Mammary epithelial cell (primary cell): ENCODE measurements at regions of chr20 and their contacts with region 1.

Region 1: DNA sequence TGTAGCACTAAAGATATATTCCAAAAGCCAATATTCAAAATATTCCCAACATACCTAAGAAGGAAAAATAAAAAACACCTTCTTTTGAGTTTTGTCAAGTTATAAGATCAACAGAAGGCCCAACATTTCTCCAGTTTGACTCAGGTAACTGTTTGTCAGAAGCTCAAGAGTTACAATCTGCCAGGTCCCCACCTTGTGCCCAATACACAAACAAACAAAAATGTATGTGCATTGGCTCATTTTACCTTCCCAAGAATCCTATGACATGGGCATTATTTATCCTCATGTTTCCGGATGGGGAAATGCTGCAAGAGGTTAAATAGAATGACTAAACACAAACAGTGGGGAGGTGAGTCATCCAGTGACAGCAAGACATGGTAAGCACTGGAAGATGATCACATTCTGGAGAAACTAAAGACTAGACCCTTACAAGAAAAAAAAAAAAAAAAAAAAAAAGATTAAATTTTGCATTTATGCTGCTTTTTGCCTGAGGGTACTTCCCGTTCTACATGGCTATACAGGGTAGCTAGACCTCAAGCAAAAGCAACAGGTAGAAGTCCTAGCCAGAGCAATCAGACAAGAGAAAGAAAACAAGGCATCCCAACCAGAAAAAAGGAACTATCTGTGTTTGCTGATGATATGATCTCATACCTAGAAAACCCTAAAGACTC is 23.6 kb upstream of the ANKRD60 start:
- DNase-seq: peak; percentile 85
- H3K4me3 ChIP-seq: no peak overlapping the region
- H3K27ac ChIP-seq: peak overlapping the region; percentile 57
- H3K4me1 ChIP-seq: peaks cover 14% of the 10 kb centered on the region
- H3K27me3 ChIP-seq: no peaks in the 10 kb centered on the region
- CTCF ChIP-seq: no peak

Region 2: GRCh38 chr20:58330687-58331086 is 78.6 kb after region 1 on chr20:
- CTCF ChIA-PET with region 1: no interaction called
- dilution Hi-C with region 1: no loop called
- in situ Hi-C with region 1: no loop called
- intact Hi-C with region 1: no loop called
- DNase-seq: no peak
- H3K4me3 ChIP-seq: no peak overlapping the region
- H3K27ac ChIP-seq: no peak overlapping the region
- H3K4me1 ChIP-seq: no peaks in the 10 kb centered on the region
- H3K27me3 ChIP-seq: no peaks in the 10 kb centered on the region
- CTCF ChIP-seq: no peak

Region 3: GRCh38 chr20:58342104-58342960 is 90.3 kb after region 1 on chr20:
- CTCF ChIA-PET with region 1: interaction called, 3 read pairs
- dilution Hi-C with region 1: no loop called
- in situ Hi-C with region 1: no loop called
- intact Hi-C with region 1: loop called (anchors 1 kb)
- DNase-seq: peak; percentile 71
- H3K4me3 ChIP-seq: no peak overlapping the region
- H3K27ac ChIP-seq: peak overlapping the region; percentile 83
- H3K4me1 ChIP-seq: peaks cover 61% of the 10 kb centered on the region
- H3K27me3 ChIP-seq: no peaks in the 10 kb centered on the region
- CTCF ChIP-seq: no peak

Region 4: GRCh38 chr20:58402827-58403226 is 150.8 kb after region 1 on chr20:
- CTCF ChIA-PET with region 1: no interaction called
- dilution Hi-C with region 1: no loop called
- in situ Hi-C with region 1: no loop called
- intact Hi-C with region 1: no loop called
- DNase-seq: no peak
- H3K4me3 ChIP-seq: no peak overlapping the region
- H3K27ac ChIP-seq: no peak overlapping the region
- H3K4me1 ChIP-seq: peaks cover 25% of the 10 kb centered on the region
- H3K27me3 ChIP-seq: no peaks in the 10 kb centered on the region
- CTCF ChIP-seq: no peak

Region 5: DNA sequence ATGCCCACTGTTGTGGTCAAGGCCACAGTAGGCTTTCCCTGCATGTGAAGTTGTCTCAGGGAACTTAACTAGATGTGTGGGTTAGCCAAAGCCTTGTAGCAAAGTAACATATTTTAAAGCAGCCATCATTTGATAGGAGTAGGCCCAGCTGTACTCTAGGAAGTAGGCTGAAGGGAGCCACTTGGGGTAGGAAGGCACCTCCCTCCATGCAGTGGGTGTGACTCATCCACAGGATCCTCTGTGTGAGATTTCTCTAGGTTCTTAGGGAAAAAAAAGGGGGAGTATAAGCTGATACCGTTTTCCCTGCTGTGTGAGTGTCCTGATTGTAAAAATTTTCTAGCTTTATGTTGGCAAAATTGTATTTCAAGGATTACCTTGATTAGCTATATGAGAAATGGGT is 181.7 kb after region 1 on chr20:
- CTCF ChIA-PET with region 1: no interaction called
- dilution Hi-C with region 1: no loop called
- in situ Hi-C with region 1: loop called in 1 of 2 experiments (anchors 10 kb)
- intact Hi-C with region 1: no loop called
- DNase-seq: peak; percentile 42
- H3K4me3 ChIP-seq: no peak overlapping the region
- H3K27ac ChIP-seq: no peak overlapping the region
- H3K4me1 ChIP-seq: peaks cover 4% of the 10 kb centered on the region
- H3K27me3 ChIP-seq: no peaks in the 10 kb centered on the region
- CTCF ChIP-seq: no peak